Activated CD4-positive, alpha-beta T cell treated with anti-CD3 and anti-CD28 coated beads, Interleukin-2, amount 10 ng/mL, durations not matched to agents 24 days and 14 days (primary cell): ENCODE measurements at regions of chr5 and their contacts with region 1.

Region 1: DNA sequence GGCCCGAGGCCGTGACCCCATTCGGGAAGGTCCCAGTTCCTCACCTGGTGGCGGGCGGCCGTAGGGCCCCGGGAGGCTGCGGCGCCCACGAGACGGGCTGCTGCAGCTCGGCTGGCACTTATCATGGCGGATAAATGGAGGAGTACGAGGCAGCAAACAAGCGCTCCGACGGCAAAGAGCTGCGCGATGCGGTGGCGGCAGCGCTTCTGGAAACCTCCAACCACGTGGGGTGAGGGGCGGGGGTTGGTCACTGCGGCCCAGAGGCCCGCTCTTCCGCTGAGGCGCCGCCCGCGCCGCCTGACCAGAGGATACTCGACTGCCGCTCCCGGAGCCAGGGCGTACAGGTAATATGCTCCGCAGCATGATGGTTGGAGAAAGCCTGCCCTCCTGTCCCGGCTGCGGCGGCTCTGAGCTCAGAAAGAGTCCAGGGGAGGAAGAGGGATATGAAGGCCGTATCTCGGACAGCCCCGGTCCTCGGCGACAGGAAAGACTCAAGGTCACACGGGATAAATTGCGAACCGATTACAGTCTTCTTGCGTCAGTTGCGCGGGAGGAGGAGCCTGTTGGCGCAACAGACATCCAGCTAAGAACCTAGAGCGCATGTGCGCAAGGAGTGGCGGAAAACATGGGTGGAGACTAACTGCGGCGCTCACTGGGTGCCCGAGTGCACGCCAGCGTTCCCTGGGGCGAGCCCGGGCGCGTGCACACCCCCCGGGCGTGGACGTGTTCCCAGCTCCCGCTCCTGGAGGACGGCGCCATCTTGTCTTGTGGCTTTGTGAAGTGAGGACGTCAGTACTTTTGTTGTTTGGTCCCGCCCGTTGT is at the start of gene HSPA9:
- DNase-seq: peak; percentile 99
- H3K4me3 Mint-ChIP-seq: peak within 1 kb of the TSS; percentile 98
- H3K27ac Mint-ChIP-seq: peak within 1 kb of the TSS; percentile 100
- H3K4me1 Mint-ChIP-seq: peaks cover 30% of the 10 kb centered on the region
- H3K27me3 Mint-ChIP-seq: no peaks in the 10 kb centered on the region
- total RNA-seq, gene HSPA9: 415 and 430 TPM in 2 replicates

Region 2: GRCh38 chr5:138110266-138110963 is 465.0 kb before region 1 on chr5:
- intact Hi-C with region 1: no loop called
- DNase-seq: no peak
- H3K4me3 Mint-ChIP-seq: no peak overlapping the region
- H3K27ac Mint-ChIP-seq: no peak overlapping the region
- H3K4me1 Mint-ChIP-seq: no peaks in the 10 kb centered on the region
- H3K27me3 Mint-ChIP-seq: peaks cover 12% of the 10 kb centered on the region

Region 3: GRCh38 chr5:138213161-138214029 is 362.0 kb before region 1 on chr5 and contains the start of gene CDC23:
- intact Hi-C with region 1: loop called (anchors 5 kb)
- DNase-seq: peak; percentile 98
- H3K4me3 Mint-ChIP-seq: peak within 1 kb of the TSS; percentile 97
- H3K27ac Mint-ChIP-seq: peak within 1 kb of the TSS; percentile 96
- H3K4me1 Mint-ChIP-seq: peaks cover 14% of the 10 kb centered on the region
- H3K27me3 Mint-ChIP-seq: no peaks in the 10 kb centered on the region
- total RNA-seq, gene CDC23: 46.6 and 47.9 TPM in 2 replicates

Region 4: DNA sequence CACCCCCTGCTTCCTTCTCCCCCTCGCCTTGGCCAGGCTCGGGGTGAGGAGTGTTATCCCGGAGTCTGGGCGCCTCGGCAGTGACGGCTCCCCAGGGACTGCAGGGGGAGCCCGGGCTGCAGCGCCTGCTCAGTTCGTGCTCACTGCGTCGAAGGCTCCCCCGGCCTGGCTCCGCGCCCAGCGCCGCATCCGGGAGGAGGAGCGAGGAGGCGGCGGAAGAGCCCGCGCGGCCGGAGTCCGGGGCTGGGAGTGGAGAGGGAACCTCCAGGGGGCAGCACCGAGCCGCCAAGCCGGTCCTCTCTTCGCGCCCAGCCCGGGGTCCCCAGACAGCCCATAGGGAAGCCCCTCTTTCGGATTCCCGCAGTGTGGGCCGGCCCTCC is 111.4 kb before region 1 on chr5:
- intact Hi-C with region 1: loop called (anchors 1 kb)
- DNase-seq: peak; percentile 98
- H3K4me3 Mint-ChIP-seq: peak overlapping the region; percentile 90
- H3K27ac Mint-ChIP-seq: peak overlapping the region; percentile 93
- H3K4me1 Mint-ChIP-seq: peaks cover 47% of the 10 kb centered on the region
- H3K27me3 Mint-ChIP-seq: peaks cover 6% of the 10 kb centered on the region

Region 5: GRCh38 chr5:138632900-138633489 is 57.6 kb after region 1 on chr5:
- intact Hi-C with region 1: loop called (anchors 1 kb)
- DNase-seq: no peak
- H3K4me3 Mint-ChIP-seq: no peak overlapping the region
- H3K27ac Mint-ChIP-seq: no peak overlapping the region
- H3K4me1 Mint-ChIP-seq: no peaks in the 10 kb centered on the region
- H3K27me3 Mint-ChIP-seq: peaks cover 51% of the 10 kb centered on the region

Region 6: DNA sequence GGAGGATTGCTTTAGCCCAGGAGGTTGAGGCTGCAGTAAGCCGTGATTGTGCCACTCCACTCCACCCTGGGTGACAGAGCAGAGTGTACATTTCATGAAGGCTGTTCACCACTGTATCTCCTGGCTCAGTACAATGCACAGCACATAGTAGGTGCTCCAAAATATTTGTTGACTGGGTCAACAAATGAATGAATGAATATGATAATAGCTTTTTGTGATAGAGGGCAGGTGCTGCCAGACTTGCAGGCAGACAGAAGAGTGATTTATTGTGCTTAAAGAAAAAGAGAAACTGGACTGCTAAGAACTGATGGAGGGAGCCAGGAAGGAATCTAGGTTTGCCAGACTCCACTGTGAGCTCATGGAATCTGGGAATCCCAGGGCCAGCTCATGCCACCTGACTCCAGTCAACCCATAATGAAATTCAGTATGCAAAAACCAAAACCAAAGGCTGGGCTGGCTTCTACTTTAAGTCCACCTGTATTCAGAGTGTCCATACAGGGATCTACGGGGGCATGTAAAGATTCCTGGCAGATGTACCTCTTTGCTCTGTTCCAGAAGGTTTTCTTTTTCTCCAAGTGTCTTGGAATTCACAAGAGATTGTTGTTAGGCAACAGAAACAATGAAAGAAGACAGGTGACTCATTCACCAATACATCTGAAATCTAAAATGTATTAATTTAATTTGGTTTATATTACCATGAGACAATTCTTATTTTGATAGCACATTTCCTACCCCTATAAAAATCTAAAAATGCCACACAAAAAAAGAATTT is 162.3 kb after region 1 on chr5:
- intact Hi-C with region 1: loop called (anchors 5 kb)
- DNase-seq: no peak
- H3K4me3 Mint-ChIP-seq: no peak overlapping the region
- H3K27ac Mint-ChIP-seq: peak overlapping the region; percentile 88
- H3K4me1 Mint-ChIP-seq: peaks cover 34% of the 10 kb centered on the region
- H3K27me3 Mint-ChIP-seq: peaks cover 13% of the 10 kb centered on the region

Region 7: GRCh38 chr5:139262742-139263445 is 687.5 kb after region 1 on chr5:
- intact Hi-C with region 1: loop called (anchors 1 kb)
- DNase-seq: peak; percentile 90
- H3K4me3 Mint-ChIP-seq: no peak overlapping the region
- H3K27ac Mint-ChIP-seq: no peak overlapping the region
- H3K4me1 Mint-ChIP-seq: peaks cover 2% of the 10 kb centered on the region
- H3K27me3 Mint-ChIP-seq: peaks cover 28% of the 10 kb centered on the region

Region 8: DNA sequence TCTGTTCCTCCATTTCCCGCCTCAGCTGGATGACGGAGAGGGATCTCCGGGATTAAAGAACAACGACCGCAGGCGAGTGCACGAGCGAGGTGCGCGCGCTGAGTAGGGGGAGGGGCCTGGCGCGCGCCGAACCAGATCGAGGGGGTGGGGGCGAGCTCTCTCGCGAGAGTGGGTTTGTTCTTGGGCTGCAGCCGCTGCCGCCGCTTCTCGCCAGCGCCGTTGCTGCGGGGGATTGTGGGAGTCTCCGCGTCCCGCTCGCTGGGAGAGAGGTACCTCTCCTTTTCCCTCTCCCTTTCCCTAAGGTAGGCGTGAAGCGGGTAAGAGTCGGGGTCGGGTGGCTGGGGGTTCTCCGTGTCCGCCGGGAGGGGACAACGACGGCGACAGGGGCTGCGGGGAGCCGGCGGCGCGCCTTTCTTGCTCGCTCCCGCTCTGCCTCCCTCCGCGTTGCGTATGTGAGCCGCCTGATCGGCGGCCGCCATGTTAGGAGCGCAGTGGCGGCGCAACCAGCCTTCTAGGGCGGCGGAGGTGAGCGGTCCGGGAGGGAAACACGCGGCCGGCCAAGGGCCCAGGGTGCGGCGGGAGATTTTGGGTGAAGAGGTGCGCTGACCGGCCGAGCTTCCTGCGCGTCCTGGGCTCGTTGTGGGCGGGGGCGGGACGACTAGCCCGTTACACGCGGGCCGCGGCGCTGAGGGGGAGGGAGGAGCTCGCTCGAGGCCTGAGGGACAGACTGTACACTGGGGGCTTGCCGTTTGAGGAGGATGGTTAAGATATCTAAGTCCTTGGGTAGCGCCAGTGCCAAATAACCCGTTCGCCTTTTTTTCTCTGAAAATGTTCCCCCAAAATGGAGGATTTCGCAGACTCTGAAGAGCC is 718.3 kb after region 1 on chr5 and contains the start of gene MATR3:
- intact Hi-C with region 1: loop called (anchors 1 kb)
- DNase-seq: peak; percentile 97
- H3K4me3 Mint-ChIP-seq: peak within 1 kb of the TSS; percentile 96
- H3K27ac Mint-ChIP-seq: peak within 1 kb of the TSS; percentile 97
- H3K4me1 Mint-ChIP-seq: peaks cover 38% of the 10 kb centered on the region
- H3K27me3 Mint-ChIP-seq: no peaks in the 10 kb centered on the region
- total RNA-seq, gene MATR3: 243 and 258 TPM in 2 replicates

Region 9: DNA sequence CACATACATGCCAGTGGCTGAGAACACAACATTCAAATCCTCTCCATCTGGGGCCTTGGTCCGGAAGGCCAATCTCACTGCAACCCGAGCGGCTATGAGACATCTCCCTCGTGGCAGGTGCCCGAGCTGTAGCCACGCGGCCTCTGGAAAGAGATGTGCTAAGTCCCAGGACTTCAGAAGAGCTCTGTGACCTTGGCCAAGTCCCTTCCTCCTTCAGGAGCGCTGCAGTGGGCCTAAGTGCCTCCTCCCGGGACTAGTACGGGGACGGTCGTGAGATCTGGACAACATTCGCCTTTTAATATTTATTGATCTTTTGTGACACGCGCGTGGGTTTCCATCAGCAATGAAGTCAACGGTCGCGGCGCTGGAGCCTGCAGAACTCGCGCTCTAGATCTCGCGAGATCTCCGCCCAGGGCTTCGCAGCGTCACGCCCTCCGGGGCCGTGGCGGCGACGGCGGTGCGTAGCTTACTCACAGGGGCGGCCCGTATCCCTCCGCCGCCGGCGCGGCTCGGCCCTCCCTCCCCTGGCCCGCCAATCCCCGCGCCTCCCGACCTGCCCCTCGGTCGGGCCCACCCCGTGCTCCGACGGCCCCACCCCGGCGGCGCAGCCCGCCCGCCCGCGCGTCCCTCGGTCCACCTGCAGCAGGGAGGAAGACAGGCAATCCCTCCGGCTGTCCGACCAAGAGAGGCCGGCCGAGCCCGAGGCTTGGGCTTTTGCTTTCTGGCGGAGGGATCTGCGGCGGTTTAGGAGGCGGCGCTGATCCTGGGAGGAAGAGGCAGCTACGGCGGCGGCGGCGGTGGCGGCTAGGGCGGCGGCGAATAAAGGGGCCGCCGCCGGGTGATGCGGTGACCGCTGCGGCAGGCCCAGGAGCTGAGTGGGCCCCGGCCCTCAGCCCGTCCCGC is 985.6 kb after region 1 on chr5 and contains the start of gene UBE2D2:
- intact Hi-C with region 1: no loop called
- DNase-seq: peak; percentile 99
- H3K4me3 Mint-ChIP-seq: peak within 1 kb of the TSS; percentile 98
- H3K27ac Mint-ChIP-seq: peak within 1 kb of the TSS; percentile 94
- H3K4me1 Mint-ChIP-seq: peaks cover 33% of the 10 kb centered on the region
- H3K27me3 Mint-ChIP-seq: no peaks in the 10 kb centered on the region
- total RNA-seq, gene UBE2D2: 272 and 275 TPM in 2 replicates